Dendritic cell treated with granulocyte-macrophage colony-stimulating factor and Interleukin-4, amounts not matched to agents 40 ng/mL and 50 ng/mL, for 4 days (primary cell): ENCODE measurements at regions of chr12 and their contacts with region 1.

Region 1: DNA sequence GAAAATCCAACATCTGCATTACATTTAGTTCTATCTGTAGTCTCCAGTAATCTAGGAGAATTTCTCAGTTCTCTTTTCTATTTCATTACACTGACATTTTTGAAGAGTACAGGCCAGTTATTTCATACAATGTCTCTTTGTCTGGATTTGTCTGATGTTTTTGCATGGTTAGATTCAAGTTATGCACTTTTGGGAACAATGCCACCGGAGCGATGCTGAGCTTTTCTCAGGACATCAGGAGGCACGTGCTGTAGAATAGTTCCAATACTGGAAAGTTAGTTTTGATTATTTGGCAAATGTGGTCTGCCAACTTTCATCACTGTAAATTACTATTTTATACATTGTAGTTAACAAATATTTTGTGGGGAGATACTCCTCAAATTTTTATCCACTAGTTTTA is 43.1 kb downstream of the ALDH1L2 start:
- H3K4me3 Mint-ChIP-seq: no peak overlapping the region
- H3K27ac Mint-ChIP-seq: no peak overlapping the region
- H3K4me1 Mint-ChIP-seq: peaks cover 6% of the 10 kb centered on the region
- H3K27me3 Mint-ChIP-seq: no peaks in the 10 kb centered on the region

Region 2: GRCh38 chr12:104890476-104891096 is 150.6 kb before region 1 on chr12:
- intact Hi-C with region 1: loop called (anchors 10 kb)
- H3K4me3 Mint-ChIP-seq: no peak overlapping the region
- H3K27ac Mint-ChIP-seq: no peak overlapping the region
- H3K4me1 Mint-ChIP-seq: peaks cover 26% of the 10 kb centered on the region
- H3K27me3 Mint-ChIP-seq: no peaks in the 10 kb centered on the region

Region 3: DNA sequence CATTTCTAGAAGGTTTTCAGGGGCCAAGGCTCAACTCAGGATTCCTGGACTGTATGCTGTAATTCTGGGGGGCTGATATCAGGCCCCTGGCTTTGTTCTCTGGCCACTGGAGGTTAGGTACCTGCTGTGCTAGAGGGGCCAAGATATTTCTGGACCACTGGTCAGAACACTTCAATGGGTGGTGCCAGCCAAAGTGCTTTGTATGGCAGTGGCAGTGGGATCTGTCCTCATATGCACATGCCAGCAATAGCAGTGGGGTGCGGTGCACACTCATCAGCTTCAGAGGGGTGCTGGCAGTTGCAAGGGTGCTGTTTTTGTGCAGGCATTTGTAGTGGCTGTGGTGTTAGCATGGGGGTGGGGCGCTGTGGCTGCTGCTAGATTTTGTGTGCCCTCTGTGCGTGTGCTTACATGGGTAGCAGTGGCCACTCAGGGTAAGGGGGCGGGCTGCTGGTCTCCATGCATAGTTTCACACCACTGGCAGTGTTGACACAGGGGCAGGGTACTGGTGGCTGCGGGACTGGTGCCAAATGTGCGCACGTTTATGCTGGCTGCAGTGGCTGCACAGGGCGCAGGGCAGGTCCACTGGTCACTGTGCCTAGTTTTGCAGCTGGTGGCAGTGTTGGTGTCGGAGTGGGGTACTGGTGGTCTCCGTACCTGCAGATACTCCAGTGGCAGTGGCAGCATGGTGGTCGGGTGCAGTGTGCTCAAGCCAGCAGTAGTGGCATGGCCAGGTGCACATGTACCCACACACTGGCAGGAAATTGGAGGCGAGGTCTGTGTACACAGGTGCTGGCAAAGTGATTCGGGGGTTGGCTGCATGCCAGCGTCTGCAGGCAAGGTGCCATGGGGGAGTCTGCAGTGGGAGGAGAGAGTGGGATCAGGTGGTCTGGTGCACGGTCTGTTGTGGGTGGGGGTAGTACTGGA is 42.5 kb before region 1 on chr12:
- intact Hi-C with region 1: loop called (anchors 10 kb)
- H3K4me3 Mint-ChIP-seq: no peak overlapping the region
- H3K27ac Mint-ChIP-seq: peak overlapping the region; percentile 69
- H3K4me1 Mint-ChIP-seq: peaks cover 49% of the 10 kb centered on the region
- H3K27me3 Mint-ChIP-seq: no peaks in the 10 kb centered on the region